ENCODE measurements at regions of chr19 and their contacts with region 1.

Region 1: DNA sequence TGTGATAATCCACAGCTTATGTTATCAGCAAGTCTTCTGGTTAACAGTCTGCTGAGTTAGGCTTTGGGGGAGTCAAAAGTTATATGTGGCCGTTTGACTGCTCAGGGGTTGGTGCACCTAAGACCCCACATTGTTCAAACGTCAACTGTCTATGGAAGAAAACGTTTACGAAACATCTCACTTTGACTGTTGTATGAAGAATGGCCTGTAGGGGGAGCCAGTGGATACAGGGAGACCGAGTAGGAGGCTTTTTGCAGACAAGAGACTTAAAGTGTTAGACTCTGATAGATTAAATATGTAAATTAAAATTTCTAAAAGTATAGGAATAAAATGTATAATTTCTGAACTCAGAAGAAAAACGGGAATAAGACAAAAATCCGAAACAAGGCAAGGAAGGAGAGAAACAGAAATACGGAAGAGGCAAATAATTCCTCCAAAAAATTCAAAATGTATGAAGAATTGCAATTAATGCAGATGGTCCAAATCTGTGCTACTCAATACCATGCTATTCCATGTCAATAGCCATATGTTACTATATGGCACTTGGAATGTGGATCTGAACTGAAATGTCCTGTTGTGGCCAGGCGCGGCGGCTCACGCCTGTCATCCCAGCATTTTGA is 37.8 kb downstream of the TNFSF14 start:
- DNase-seq: peak; percentile 59
- H3K4me3 ChIP-seq: no peak overlapping the region
- H3K27ac ChIP-seq: no peak overlapping the region
- H3K4me1 ChIP-seq: no peaks in the 10 kb centered on the region
- H3K27me3 ChIP-seq: no peaks in the 10 kb centered on the region
- CTCF ChIP-seq: peak; percentile 82 to 91

Region 2: GRCh38 chr19:6218491-6219162 is 413.5 kb before region 1 on chr19:
- CTCF ChIA-PET with region 1: interaction called, 10 read pairs
- dilution Hi-C with region 1: no loop called
- in situ Hi-C with region 1: no loop called
- intact Hi-C with region 1: no loop called
- DNase-seq: peak; percentile 58
- H3K4me3 ChIP-seq: no peak overlapping the region
- H3K27ac ChIP-seq: no peak overlapping the region
- H3K4me1 ChIP-seq: peaks cover 21% of the 10 kb centered on the region
- H3K27me3 ChIP-seq: no peaks in the 10 kb centered on the region
- CTCF ChIP-seq: peak; percentile 92 to 96

Region 3: DNA sequence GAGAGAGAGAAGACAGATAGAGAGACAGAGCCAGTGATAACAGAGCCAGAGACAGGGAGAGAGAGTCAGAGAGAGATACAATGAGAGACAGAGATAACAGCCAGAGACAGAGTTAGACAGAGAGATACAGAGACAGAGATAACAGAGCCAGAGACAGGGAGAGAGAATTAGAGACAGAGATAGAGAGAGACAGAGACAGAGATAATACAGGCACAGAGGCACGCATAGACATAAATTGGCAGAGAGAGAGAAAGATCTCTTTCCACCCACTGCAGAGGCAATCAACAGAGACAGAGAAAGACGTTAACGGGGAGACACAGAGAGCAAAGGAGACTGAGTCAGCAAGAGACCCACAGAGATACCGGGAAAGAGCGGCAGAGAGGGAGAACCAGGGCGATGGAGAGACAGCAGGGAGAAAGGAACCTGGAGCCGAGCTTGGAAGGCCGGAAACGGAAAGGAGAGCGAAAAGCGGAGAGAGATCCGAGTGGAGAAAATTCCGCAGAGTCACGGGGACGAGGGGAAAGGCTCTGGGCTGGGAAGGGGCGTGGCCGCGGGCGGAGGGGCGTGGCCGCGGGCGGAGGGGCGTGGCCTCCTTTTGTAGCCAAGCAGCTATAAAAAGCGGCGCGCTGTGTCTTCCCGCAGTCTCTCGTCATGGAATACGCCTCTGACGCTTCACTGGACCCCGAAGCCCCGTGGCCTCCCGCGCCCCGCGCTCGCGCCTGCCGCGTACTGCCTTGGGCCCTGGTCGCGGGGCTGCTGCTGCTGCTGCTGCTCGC is 101.5 kb before region 1 on chr19 and contains the start of gene TNFSF9:
- CTCF ChIA-PET with region 1: no interaction called
- dilution Hi-C with region 1: no loop called
- in situ Hi-C with region 1: loop called in 1 of 2 experiments (anchors 5 kb)
- intact Hi-C with region 1: loop called (anchors 1 kb)
- DNase-seq: peak; percentile 87
- H3K4me3 ChIP-seq: peak within 1 kb of the TSS; percentile 63 to 88 (median 77)
- H3K27ac ChIP-seq: peak within 1 kb of the TSS; percentile 90
- H3K4me1 ChIP-seq: peaks cover 11% of the 10 kb centered on the region
- H3K27me3 ChIP-seq: no peaks in the 10 kb centered on the region
- CTCF ChIP-seq: no peak
- total RNA-seq, gene TNFSF9: 9.5 to 15.2 TPM

Region 4: DNA sequence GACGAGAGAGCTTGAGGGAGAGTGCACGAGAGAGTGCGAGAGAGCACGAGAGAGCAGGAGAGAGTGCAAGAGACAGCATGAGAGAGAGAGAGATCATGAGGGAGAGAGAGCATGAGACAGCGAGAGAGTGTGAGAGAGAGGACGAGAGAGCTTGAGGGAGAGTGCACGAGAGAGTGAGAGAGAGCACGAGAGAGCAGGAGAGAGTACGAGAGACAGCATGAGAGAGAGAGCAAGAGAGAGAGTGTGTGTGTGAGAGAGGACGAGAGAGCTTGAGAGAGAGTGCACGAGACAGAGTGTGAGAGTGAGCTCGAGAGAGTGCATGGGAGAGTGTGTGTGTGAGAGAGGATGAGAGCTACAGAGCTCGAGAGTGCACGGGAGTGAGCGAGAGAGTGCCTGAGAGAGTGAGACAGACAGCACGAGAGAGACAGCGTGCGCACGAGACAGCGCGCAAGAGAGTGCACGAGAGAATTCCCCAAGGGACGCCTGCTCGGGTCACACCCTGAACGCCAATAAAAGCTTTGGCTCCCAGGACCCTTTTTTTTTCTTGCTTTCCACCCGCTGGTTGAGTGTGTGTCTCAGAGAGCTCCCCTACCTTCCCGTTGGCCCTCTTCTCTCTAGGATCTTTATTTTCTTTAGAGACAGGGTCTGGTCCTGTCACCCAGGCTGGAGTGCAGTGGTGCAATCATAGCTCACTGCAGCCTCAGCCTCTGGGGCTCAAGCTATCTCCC is 44.9 kb before region 1 on chr19:
- CTCF ChIA-PET with region 1: no interaction called
- dilution Hi-C with region 1: no loop called
- in situ Hi-C with region 1: no loop called
- intact Hi-C with region 1: loop called (anchors 2 kb)
- DNase-seq: peak; percentile 28
- H3K4me3 ChIP-seq: peak overlapping the region in 2 of 3 experiments; percentile 9 to 14
- H3K27ac ChIP-seq: no peak overlapping the region
- H3K4me1 ChIP-seq: peaks cover 18% of the 10 kb centered on the region
- H3K27me3 ChIP-seq: no peaks in the 10 kb centered on the region
- CTCF ChIP-seq: no peak

Region 5: GRCh38 chr19:6737284-6738046 is 105.4 kb after region 1 on chr19 and contains the start of gene GPR108:
- CTCF ChIA-PET with region 1: no interaction called
- dilution Hi-C with region 1: no loop called
- in situ Hi-C with region 1: no loop called
- intact Hi-C with region 1: loop called (anchors 1 kb)
- DNase-seq: peak; percentile 100
- H3K4me3 ChIP-seq: peak within 1 kb of the TSS; percentile 74 to 99 (median 83)
- H3K27ac ChIP-seq: peak within 1 kb of the TSS; percentile 80
- H3K4me1 ChIP-seq: peaks cover 29% of the 10 kb centered on the region
- H3K27me3 ChIP-seq: no peaks in the 10 kb centered on the region
- CTCF ChIP-seq: no peak
- total RNA-seq, gene GPR108: 50.2 to 95.9 TPM

Measured in mammary epithelial cell (primary cell).